ENCODE measurements at regions of chr14 and their contacts with region 1.

Region 1: GRCh38 chr14:96741151-96741977 is 55.8 kb upstream of the VRK1 start:
- DNase-seq: peak; percentile 10 to 94
- H3K4me3 ChIP-seq: peak overlapping the region; percentile 30 to 61 (median 47)
- H3K27ac ChIP-seq: no peak overlapping the region
- H3K4me1 ChIP-seq: peaks cover 0 to 5% (median 3%) of the 10 kb centered on the region in 4 experiments
- H3K27me3 ChIP-seq: no peaks in the 10 kb centered on the region; a peak in 1 of 7 replicates
- CTCF ChIP-seq: peak; percentile 73 to 88 (median 80)
- EP300 ChIP-seq: no peak
- POLR2A ChIP-seq: no peak
- RAD21 ChIP-seq: peak; percentile 87 to 92

Region 2: DNA sequence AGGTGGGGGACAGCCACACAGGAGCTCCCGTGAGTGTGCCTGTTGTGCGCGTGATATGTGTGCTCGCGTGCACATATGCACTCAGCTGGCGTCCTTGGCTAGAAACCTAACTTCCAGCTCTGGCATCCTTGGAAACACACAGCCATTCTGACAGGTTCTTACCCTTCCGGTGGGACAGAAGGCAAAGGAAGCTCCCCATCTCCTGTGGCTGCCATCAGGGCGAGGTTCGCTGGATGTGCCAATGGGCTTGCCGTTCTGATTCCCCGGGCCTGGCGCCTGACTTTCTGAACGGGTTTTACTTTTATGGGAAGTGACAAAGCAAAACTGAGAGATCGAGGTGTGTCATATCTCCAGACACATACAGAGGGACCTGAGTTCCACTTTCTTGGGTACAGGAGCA is 114.4 kb before region 1 on chr14:
- CTCF ChIA-PET with region 1: interaction called, 10 read pairs
- POLR2A ChIA-PET with region 1: no interaction called
- DNase-seq: no peak
- H3K4me3 ChIP-seq: no peak overlapping the region
- H3K27ac ChIP-seq: no peak overlapping the region
- H3K4me1 ChIP-seq: peaks cover 0 to 3% (median under 1%) of the 10 kb centered on the region in 4 experiments; a peak in 2 of 7 replicates
- H3K27me3 ChIP-seq: no peaks in the 10 kb centered on the region
- CTCF ChIP-seq: no peak
- EP300 ChIP-seq: no peak
- POLR2A ChIP-seq: no peak
- RAD21 ChIP-seq: no peak

Region 3: DNA sequence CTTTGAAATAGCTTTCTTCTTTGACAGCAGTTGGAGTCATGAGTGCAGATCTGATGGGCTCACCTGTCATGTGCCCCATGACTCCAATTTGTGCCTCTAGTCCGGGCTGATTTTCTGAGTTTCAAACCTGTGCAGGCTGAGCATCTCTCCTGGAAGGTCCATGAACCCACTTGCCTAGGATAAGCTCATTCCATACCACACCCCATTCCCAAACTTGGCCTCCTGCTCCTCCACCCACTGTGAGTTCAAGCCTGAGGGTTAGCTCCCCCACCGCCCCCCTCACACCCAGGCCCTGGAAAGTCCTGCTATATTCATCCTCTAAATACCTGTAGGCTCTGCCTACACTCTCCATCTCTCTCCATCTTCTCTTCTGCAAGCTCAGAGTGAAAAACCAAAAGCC is 71.0 kb before region 1 on chr14:
- CTCF ChIA-PET with region 1: interaction called, 15 read pairs
- POLR2A ChIA-PET with region 1: no interaction called
- DNase-seq: peak in 1 of 2 experiments; percentile 22
- H3K4me3 ChIP-seq: no peak overlapping the region
- H3K27ac ChIP-seq: no peak overlapping the region
- H3K4me1 ChIP-seq: peaks cover 0 to 11% (median 3%) of the 10 kb centered on the region in 4 experiments; a peak in 2 of 7 replicates
- H3K27me3 ChIP-seq: no peaks in the 10 kb centered on the region
- CTCF ChIP-seq: no peak
- EP300 ChIP-seq: no peak
- POLR2A ChIP-seq: no peak
- RAD21 ChIP-seq: no peak

Region 4: GRCh38 chr14:96917442-96917963 is 176.1 kb after region 1 on chr14:
- CTCF ChIA-PET with region 1: no interaction called
- POLR2A ChIA-PET with region 1: no interaction called
- DNase-seq: no peak
- H3K4me3 ChIP-seq: no peak overlapping the region
- H3K27ac ChIP-seq: no peak overlapping the region
- H3K4me1 ChIP-seq: no peaks in the 10 kb centered on the region
- H3K27me3 ChIP-seq: no peaks in the 10 kb centered on the region
- CTCF ChIP-seq: no peak
- EP300 ChIP-seq: no peak
- POLR2A ChIP-seq: no peak
- RAD21 ChIP-seq: no peak

Region 5: GRCh38 chr14:97033556-97034081 is 292.3 kb after region 1 on chr14:
- CTCF ChIA-PET with region 1: no interaction called
- POLR2A ChIA-PET with region 1: no interaction called
- DNase-seq: peak in 1 of 2 experiments; percentile 70
- H3K4me3 ChIP-seq: peak overlapping the region; percentile 34 to 59 (median 41)
- H3K27ac ChIP-seq: no peak overlapping the region
- H3K4me1 ChIP-seq: peaks cover 6 to 17% (median 9%) of the 10 kb centered on the region in 4 experiments
- H3K27me3 ChIP-seq: peaks cover 4 to 27% (median 18%) of the 10 kb centered on the region in 4 experiments; a peak in 6 of 7 replicates
- CTCF ChIP-seq: no peak
- EP300 ChIP-seq: no peak
- POLR2A ChIP-seq: no peak
- RAD21 ChIP-seq: no peak